ENCODE measurements at regions of chr22 and their contacts with region 1.

Region 1: DNA sequence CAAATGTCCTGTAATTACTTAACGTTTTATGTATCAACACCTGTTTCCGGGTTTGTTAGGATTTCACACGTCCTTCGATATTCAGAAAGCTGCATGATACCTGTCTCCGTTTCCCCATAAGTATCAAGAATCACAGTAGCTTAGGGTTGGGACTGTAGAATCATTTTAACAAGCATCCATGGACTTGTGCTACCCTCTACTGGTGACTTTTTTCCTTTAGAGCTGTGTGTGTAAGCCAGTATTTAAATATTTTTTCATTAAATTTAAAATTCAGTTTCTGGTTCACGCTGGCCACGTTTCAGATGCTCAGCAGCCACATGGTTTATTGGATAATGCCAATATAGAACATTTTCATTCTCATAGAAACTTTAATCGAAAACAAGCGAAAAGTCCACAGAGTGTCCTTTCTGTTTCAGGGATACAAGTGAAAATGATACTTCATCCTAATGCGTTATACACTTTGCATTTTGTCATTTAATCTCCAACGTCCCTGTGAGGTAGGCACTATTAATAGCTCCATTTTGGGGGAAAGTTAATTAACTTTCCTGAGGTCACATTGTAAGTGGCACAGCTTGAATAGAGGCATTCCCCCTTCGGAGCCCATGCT is 61.5 kb upstream of the SLC25A18 start:
- DNase-seq: peak in 7 of 9 donors; percentile 39 to 75 (median 61)
- ATAC-seq: peak; percentile 87
- H3K4me3 ChIP-seq: no peak overlapping the region
- H3K4me3 Mint-ChIP-seq: no peak overlapping the region
- H3K27ac ChIP-seq: no peak overlapping the region
- H3K27ac Mint-ChIP-seq: no peak overlapping the region
- H3K4me1 ChIP-seq: no peaks in the 10 kb centered on the region
- H3K4me1 Mint-ChIP-seq: peaks cover 0 to 3% (median 0%) of the 10 kb centered on the region in 7 donors
- H3K27me3 ChIP-seq: no peaks in the 10 kb centered on the region
- H3K27me3 Mint-ChIP-seq: peaks cover 0 to 9% (median 5%) of the 10 kb centered on the region in 5 donors

Region 2: GRCh38 chr22:16917144-16918003 is 584.4 kb before region 1 on chr22:
- CTCF ChIA-PET with region 1: interaction called, 8 read pairs
- POLR2A ChIA-PET with region 1: no interaction called
- intact Hi-C with region 1: loop called (anchors 1 to 2 kb)
- DNase-seq: peak; percentile 11 to 60 (median 28)
- ATAC-seq: no peak
- H3K4me3 ChIP-seq: no peak overlapping the region
- H3K4me3 Mint-ChIP-seq: no peak overlapping the region
- H3K27ac ChIP-seq: no peak overlapping the region
- H3K27ac Mint-ChIP-seq: no peak overlapping the region
- H3K4me1 ChIP-seq: no peaks in the 10 kb centered on the region
- H3K4me1 Mint-ChIP-seq: peaks cover 0 to 6% (median 3%) of the 10 kb centered on the region in 7 donors
- H3K27me3 ChIP-seq: no peaks in the 10 kb centered on the region
- H3K27me3 Mint-ChIP-seq: peaks cover 19 to 38% (median 29%) of the 10 kb centered on the region in 5 donors

Region 3: GRCh38 chr22:17077255-17077654 is 424.5 kb before region 1 on chr22:
- CTCF ChIA-PET with region 1: interaction called, 77 read pairs
- POLR2A ChIA-PET with region 1: interaction called, 7 read pairs
- intact Hi-C with region 1: loop called (anchors 1 kb)
- DNase-seq: no peak
- ATAC-seq: no peak
- H3K4me3 ChIP-seq: no peak overlapping the region
- H3K4me3 Mint-ChIP-seq: no peak overlapping the region
- H3K27ac ChIP-seq: no peak overlapping the region
- H3K27ac Mint-ChIP-seq: no peak overlapping the region
- H3K4me1 ChIP-seq: peaks cover 0 to 10% of the 10 kb centered on the region in 2 donors
- H3K4me1 Mint-ChIP-seq: peaks cover 0 to 19% (median 12%) of the 10 kb centered on the region in 7 donors
- H3K27me3 ChIP-seq: no peaks in the 10 kb centered on the region
- H3K27me3 Mint-ChIP-seq: peaks cover 0 to 38% (median 0%) of the 10 kb centered on the region in 5 donors

Region 4: DNA sequence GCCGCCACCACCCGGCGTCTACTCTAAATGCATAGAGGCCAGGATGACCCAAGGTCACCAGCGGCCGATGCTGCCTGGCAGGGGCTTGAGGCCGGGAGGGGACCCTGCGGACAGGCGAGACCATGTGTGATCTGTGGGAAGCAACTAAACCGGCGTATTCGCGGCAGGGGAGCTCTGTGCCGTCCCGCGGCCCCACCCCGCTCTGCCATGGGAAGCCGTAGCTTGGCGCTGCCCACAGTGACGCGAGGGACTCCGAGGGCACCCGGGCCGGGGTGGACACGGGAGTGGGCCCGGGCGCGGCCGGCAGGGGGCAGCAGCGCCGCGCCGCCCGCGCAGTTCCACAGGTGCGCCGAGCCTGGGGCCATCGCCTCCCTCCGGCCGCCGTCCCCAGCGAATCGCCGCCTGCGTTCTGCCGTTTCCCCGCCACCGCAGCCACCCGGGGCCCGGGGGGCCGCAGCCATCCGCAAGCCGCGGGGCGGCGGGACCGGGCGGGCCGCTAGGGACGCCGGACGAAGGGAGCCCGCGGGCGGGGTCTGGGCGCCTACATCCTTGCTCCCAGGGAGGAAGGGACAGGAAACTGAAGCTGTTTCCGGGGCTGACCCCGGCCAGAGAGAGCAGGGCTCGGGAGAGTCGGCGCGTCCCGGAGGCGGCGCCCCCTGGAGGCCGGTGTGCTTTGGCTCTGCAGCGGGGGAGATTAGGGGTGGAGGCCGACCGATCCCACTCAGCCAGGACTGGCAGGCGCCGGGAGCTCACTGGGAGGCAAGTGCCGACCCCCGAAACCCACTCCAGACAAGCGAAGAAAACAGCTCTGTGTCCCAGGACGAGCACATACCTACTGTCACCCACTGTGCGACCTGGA is 330.2 kb before region 1 on chr22:
- CTCF ChIA-PET with region 1: interaction called, 80 read pairs
- POLR2A ChIA-PET with region 1: interaction called, 5 read pairs
- intact Hi-C with region 1: loop called (anchors 1 kb)
- DNase-seq: peak; percentile 54 to 89 (median 64)
- ATAC-seq: peak; percentile 96
- H3K4me3 ChIP-seq: peak overlapping the region; percentile 71
- H3K4me3 Mint-ChIP-seq: peak overlapping the region; percentile 82 to 91 (median 86)
- H3K27ac ChIP-seq: peak overlapping the region; percentile 66
- H3K27ac Mint-ChIP-seq: peak overlapping the region; percentile 24 to 88 (median 71)
- H3K4me1 ChIP-seq: peaks cover 0 to 4% of the 10 kb centered on the region in 2 donors
- H3K4me1 Mint-ChIP-seq: peaks cover 3 to 9% (median 5%) of the 10 kb centered on the region in 7 donors
- H3K27me3 ChIP-seq: no peaks in the 10 kb centered on the region
- H3K27me3 Mint-ChIP-seq: peaks cover 0 to 11% (median 0%) of the 10 kb centered on the region in 5 donors

Region 5: GRCh38 chr22:17368554-17369438 is 133.0 kb before region 1 on chr22:
- CTCF ChIA-PET with region 1: no interaction called
- POLR2A ChIA-PET with region 1: no interaction called
- intact Hi-C with region 1: loop called in 1 of 2 experiments (anchors 1 kb)
- DNase-seq: peak in 3 of 9 donors; percentile 9 to 26 (median 16)
- ATAC-seq: peak; percentile 6
- H3K4me3 ChIP-seq: no peak overlapping the region
- H3K4me3 Mint-ChIP-seq: peak overlapping the region; percentile 75 to 86 (median 81)
- H3K27ac ChIP-seq: no peak overlapping the region
- H3K27ac Mint-ChIP-seq: peak overlapping the region in 2 of 9 donors; percentile 38 to 55
- H3K4me1 ChIP-seq: peaks cover 0 to 14% of the 10 kb centered on the region in 2 donors
- H3K4me1 Mint-ChIP-seq: peaks cover 13 to 35% (median 28%) of the 10 kb centered on the region in 7 donors
- H3K27me3 ChIP-seq: peaks cover 0 to 16% of the 10 kb centered on the region in 2 donors
- H3K27me3 Mint-ChIP-seq: peaks cover 53 to 68% (median 54%) of the 10 kb centered on the region in 5 donors

Measured in naive thymus-derived CD4-positive, alpha-beta T cell (primary cell).